ENCODE measurements at regions of chrX and their contacts with region 1.

Region 1: GRCh38 chrX:50100188-50100587 is 100.6 kb downstream of the AKAP4 start:
- DNase-seq: peak; percentile 4 to 5
- ATAC-seq: peak; percentile 73 to 83; a peak in 5 of 6 replicates
- H3K4me3 ChIP-seq: no peak overlapping the region
- H3K27ac ChIP-seq: no peak overlapping the region
- H3K4me1 ChIP-seq: no peaks in the 10 kb centered on the region
- CTCF ChIP-seq: peak; percentile 44; the same call in 2 of the 3 replicates
- EP300 ChIP-seq: no peak
- POLR2A ChIP-seq: no peak
- RAD21 ChIP-seq: peak; percentile 58 to 61

Region 2: DNA sequence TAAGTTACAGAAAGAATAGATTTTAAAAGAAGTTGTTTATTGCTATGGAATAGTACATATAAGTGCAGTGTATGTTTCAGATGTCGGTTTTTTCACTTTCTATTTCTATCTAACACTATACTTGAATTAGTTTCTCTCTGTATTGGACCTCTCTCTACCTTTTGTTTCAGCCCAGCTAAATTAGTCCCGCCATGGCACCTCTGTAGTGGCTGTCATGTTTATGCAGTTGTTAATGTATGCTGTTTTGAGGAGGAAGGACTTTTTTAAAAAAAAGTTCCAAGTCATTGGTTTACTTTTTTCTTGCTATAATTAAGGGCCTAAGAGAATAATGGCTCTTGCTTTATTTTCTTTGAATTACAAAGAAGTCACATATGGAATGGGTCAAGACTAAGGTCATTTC is 17.4 kb before region 1 on chrX:
- CTCF ChIA-PET with region 1: no interaction called
- POLR2A ChIA-PET with region 1: no interaction called
- DNase-seq: no peak
- ATAC-seq: no peak
- H3K4me3 ChIP-seq: no peak overlapping the region
- H3K27ac ChIP-seq: no peak overlapping the region
- H3K4me1 ChIP-seq: 0 out of 3 replicates have a peak, but pooled peaks cover 3% of the 10 kb centered on the region
- CTCF ChIP-seq: no peak
- EP300 ChIP-seq: no peak
- POLR2A ChIP-seq: no peak
- RAD21 ChIP-seq: no peak

Region 3: GRCh38 chrX:50579955-50580354 is 479.8 kb after region 1 on chrX:
- CTCF ChIA-PET with region 1: interaction called, 45 read pairs
- POLR2A ChIA-PET with region 1: no interaction called
- DNase-seq: peak; percentile 24 to 66
- ATAC-seq: peak; percentile 88 to 91
- H3K4me3 ChIP-seq: no peak overlapping the region
- H3K27ac ChIP-seq: no peak overlapping the region
- H3K4me1 ChIP-seq: no peaks in the 10 kb centered on the region
- CTCF ChIP-seq: peak; percentile 53
- EP300 ChIP-seq: no peak
- POLR2A ChIP-seq: no peak
- RAD21 ChIP-seq: peak; percentile 62 to 63

Measured in A549 (cell line).